ENCODE measurements at regions of chr10 and their contacts with region 1.

Region 1: GRCh38 chr10:98262571-98262970 is 5.4 kb downstream of the LOXL4 start:
- DNase-seq: peak; percentile 70
- ATAC-seq: peak; percentile 45
- H3K4me3 ChIP-seq: no peak overlapping the region
- H3K27ac ChIP-seq: no peak overlapping the region
- H3K4me1 ChIP-seq: peaks cover 25% of the 10 kb centered on the region
- H3K27me3 ChIP-seq: no peaks in the 10 kb centered on the region
- CTCF ChIP-seq: peak; percentile 68

Region 2: DNA sequence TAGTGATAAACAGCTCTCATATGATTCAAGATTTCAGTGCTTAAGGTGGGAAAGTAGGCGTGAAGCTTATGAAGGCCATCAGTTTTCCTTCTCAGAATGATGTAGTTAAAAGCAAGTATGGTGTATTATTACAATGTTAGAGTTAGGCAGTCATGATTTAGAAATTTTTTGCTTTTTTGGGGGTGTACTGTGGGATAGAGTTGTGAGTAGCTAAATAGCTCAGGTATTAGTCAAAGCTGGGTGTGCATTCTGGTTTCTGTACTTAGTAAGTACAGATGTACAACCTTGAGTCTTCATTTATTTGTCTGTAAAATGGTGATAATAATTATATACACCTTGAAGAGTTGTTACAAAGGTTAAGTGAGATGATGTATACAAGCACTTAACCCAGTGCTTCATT is 75.9 kb before region 1 on chr10:
- CTCF ChIA-PET with region 1: no interaction called
- POLR2A ChIA-PET with region 1: no interaction called
- intact Hi-C with region 1: no loop called
- DNase-seq: no peak
- ATAC-seq: no peak
- H3K4me3 ChIP-seq: no peak overlapping the region
- H3K27ac ChIP-seq: no peak overlapping the region
- H3K4me1 ChIP-seq: no peaks in the 10 kb centered on the region
- H3K27me3 ChIP-seq: no peaks in the 10 kb centered on the region
- CTCF ChIP-seq: no peak

Region 3: GRCh38 chr10:98361131-98362025 is 98.8 kb after region 1 on chr10:
- CTCF ChIA-PET with region 1: no interaction called
- POLR2A ChIA-PET with region 1: no interaction called
- intact Hi-C with region 1: no loop called
- DNase-seq: no peak
- ATAC-seq: no peak
- H3K4me3 ChIP-seq: no peak overlapping the region
- H3K27ac ChIP-seq: no peak overlapping the region
- H3K4me1 ChIP-seq: peaks cover 15% of the 10 kb centered on the region
- H3K27me3 ChIP-seq: no peaks in the 10 kb centered on the region
- CTCF ChIP-seq: no peak

Region 4: DNA sequence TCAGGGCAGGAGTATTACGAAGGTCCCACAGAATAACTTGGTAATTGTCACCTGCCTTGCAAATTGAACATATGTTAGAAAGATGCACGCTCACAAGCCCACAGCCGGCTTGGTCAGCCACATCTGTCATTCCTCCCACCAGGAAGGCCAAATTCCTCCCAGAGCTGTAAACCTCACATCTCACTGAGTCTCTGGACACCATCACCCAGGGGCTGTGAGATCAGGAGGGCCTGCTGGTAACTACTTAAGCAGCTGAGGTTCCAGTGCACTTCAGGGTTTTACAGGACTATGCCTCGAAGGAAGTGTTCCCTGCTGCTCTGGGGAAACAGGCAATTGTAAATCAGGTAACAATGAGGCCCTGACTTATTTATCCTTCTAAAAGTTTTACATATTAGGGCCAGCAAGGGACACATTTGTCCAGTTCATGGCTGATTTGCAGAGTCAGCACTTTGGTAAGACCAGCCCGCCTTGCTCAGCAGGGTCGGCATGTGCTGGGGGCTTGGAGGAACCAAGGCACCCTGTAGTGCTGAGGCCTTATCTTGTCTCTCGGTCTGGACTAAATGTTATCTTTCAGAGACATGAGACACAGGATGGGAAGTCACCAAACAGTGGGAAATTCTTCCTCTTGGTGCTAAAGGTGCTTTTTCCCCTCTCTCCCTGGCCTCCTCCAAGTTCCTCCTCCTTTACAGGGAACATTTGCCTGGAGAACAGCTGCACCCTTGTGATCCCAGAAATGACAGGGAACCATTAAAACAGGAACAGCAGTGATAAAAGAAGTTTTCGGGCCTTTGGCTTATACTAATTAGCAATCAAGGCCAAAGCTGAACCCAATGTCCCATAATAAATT is 118.1 kb after region 1 on chr10:
- CTCF ChIA-PET with region 1: no interaction called
- POLR2A ChIA-PET with region 1: no interaction called
- intact Hi-C with region 1: no loop called
- DNase-seq: no peak
- ATAC-seq: no peak
- H3K4me3 ChIP-seq: no peak overlapping the region
- H3K27ac ChIP-seq: no peak overlapping the region
- H3K4me1 ChIP-seq: 0 out of 2 replicates have a peak, but pooled peaks cover 7% of the 10 kb centered on the region
- H3K27me3 ChIP-seq: no peaks in the 10 kb centered on the region
- CTCF ChIP-seq: no peak

Region 5: GRCh38 chr10:98664331-98665042 is 401.9 kb after region 1 on chr10:
- CTCF ChIA-PET with region 1: no interaction called
- POLR2A ChIA-PET with region 1: no interaction called
- intact Hi-C with region 1: loop called (anchors 10 kb)
- DNase-seq: peak; percentile 67
- ATAC-seq: peak; percentile 77
- H3K4me3 ChIP-seq: no peak overlapping the region
- H3K27ac ChIP-seq: no peak overlapping the region
- H3K4me1 ChIP-seq: no peaks in the 10 kb centered on the region
- H3K27me3 ChIP-seq: no peaks in the 10 kb centered on the region
- CTCF ChIP-seq: peak; percentile 71

Measured in PC-3 (cell line).